ENCODE measurements at regions of chr16 and their contacts with region 1.

Region 1: GRCh38 chr16:84175350-84176081 is 11.3 kb downstream of the TAF1C start:
- DNase-seq: peak; percentile 39 to 71
- ATAC-seq: peak; percentile 83 to 98 (median 87)
- H3K4me3 ChIP-seq: no peak overlapping the region
- H3K4me3 Mint-ChIP-seq: no peak overlapping the region
- H3K27ac ChIP-seq: no peak overlapping the region
- H3K27ac Mint-ChIP-seq: peak overlapping the region in 1 of 2 donors; percentile 5
- H3K4me1 ChIP-seq: peaks cover 8% of the 10 kb centered on the region
- H3K4me1 Mint-ChIP-seq: peaks cover 0 to 7% of the 10 kb centered on the region in 2 donors
- H3K27me3 ChIP-seq: no peaks in the 10 kb centered on the region
- H3K27me3 Mint-ChIP-seq: no peaks in the 10 kb centered on the region
- CTCF ChIP-seq: peak; percentile 68

Region 2: GRCh38 chr16:84084570-84085270 is 90.8 kb before region 1 on chr16:
- intact Hi-C with region 1: loop called (anchors 1 kb)
- DNase-seq: peak; percentile 36 to 87
- ATAC-seq: peak; percentile 65 to 77 (median 75)
- H3K4me3 ChIP-seq: no peak overlapping the region
- H3K4me3 Mint-ChIP-seq: no peak overlapping the region
- H3K27ac ChIP-seq: no peak overlapping the region
- H3K27ac Mint-ChIP-seq: no peak overlapping the region
- H3K4me1 ChIP-seq: peaks cover 27% of the 10 kb centered on the region
- H3K4me1 Mint-ChIP-seq: peaks cover 27 to 37% of the 10 kb centered on the region in 2 donors
- H3K27me3 ChIP-seq: no peaks in the 10 kb centered on the region
- H3K27me3 Mint-ChIP-seq: no peaks in the 10 kb centered on the region
- CTCF ChIP-seq: peak; percentile 63